Ovary (tissue), 10 donors: ENCODE measurements at regions of chr9 and their contacts with region 1.

Region 1: GRCh38 chr9:2043881-2044462 is 28.8 kb downstream of the SMARCA2 start:
- DNase-seq: no peak
- H3K4me3 ChIP-seq: no peak overlapping the region
- H3K27ac ChIP-seq: no peak overlapping the region
- H3K4me1 ChIP-seq: peaks cover 5% of the 10 kb centered on the region
- H3K27me3 ChIP-seq: no peaks in the 10 kb centered on the region
- CTCF ChIP-seq: no peak
- EP300 ChIP-seq: no peak
- POLR2A ChIP-seq: no peak

Region 2: GRCh38 chr9:1939926-1940368 is 104.0 kb before region 1 on chr9:
- intact Hi-C with region 1: loop called in 1 of 4 experiments (anchors 10 kb)
- DNase-seq: no peak
- H3K4me3 ChIP-seq: no peak overlapping the region
- H3K27ac ChIP-seq: no peak overlapping the region
- H3K4me1 ChIP-seq: no peaks in the 10 kb centered on the region
- H3K27me3 ChIP-seq: no peaks in the 10 kb centered on the region
- CTCF ChIP-seq: no peak
- EP300 ChIP-seq: no peak
- POLR2A ChIP-seq: no peak

Region 3: GRCh38 chr9:2053883-2054845 is 10.2 kb after region 1 on chr9:
- intact Hi-C with region 1: no loop called
- DNase-seq: no peak
- H3K4me3 ChIP-seq: no peak overlapping the region
- H3K27ac ChIP-seq: no peak overlapping the region
- H3K4me1 ChIP-seq: no peaks in the 10 kb centered on the region
- H3K27me3 ChIP-seq: no peaks in the 10 kb centered on the region
- CTCF ChIP-seq: no peak
- EP300 ChIP-seq: no peak
- POLR2A ChIP-seq: no peak

Region 4: DNA sequence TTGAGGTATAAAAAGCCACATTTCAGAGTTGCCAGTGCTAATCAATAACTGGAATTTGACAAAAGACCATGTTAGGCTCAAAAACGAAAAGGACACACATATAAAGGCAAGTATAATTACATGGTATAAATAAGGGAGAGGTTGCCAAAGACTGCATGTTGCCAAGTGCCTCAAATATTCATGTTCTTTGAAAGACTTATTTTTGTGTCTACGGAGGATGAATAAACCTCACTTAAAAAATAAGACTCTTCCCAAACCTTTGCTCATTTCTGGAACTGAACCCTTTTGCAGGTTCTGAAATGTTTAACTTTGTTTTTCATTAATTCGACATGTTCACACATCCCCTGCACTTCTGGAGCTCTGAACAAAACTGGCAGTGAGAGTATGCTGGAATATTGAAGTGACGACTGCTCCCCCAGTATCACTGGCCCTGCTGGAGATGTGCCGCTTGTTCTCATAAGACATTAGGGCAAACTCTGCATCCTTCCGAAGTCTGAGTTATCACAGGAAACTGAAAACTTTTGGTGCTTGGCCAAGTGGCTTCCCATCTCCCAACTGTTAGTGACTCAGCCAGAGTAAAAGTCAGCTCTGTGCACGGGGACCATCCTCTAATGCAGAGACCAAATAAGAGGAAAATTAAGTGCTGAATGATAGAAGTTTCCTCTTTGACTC is 1919.1 kb after region 1 on chr9:
- intact Hi-C with region 1: no loop called
- DNase-seq: peak; percentile 44 to 75 (median 68)
- H3K4me3 ChIP-seq: no peak overlapping the region
- H3K27ac ChIP-seq: no peak overlapping the region
- H3K4me1 ChIP-seq: peaks cover 8% of the 10 kb centered on the region
- H3K27me3 ChIP-seq: no peaks in the 10 kb centered on the region
- CTCF ChIP-seq: no peak
- EP300 ChIP-seq: no peak
- POLR2A ChIP-seq: no peak